ENCODE measurements at regions of chr1 and their contacts with region 1.

Region 1: GRCh38 chr1:101128211-101128727 is 102.7 kb upstream of the DPH5 start:
- DNase-seq: peak; percentile 23
- H3K4me3 Mint-ChIP-seq: no peak overlapping the region
- H3K27ac Mint-ChIP-seq: peak overlapping the region; percentile 58
- H3K4me1 Mint-ChIP-seq: peaks cover 60% of the 10 kb centered on the region
- H3K27me3 Mint-ChIP-seq: no peaks in the 10 kb centered on the region

Region 2: GRCh38 chr1:100443811-100444571 is 684.3 kb before region 1 on chr1:
- CTCF ChIA-PET with region 1: no interaction called
- intact Hi-C with region 1: loop called (anchors 10 kb)
- DNase-seq: peak; percentile 53
- H3K4me3 Mint-ChIP-seq: peak overlapping the region; percentile 72
- H3K27ac Mint-ChIP-seq: peak overlapping the region; percentile 96
- H3K4me1 Mint-ChIP-seq: peaks cover 85% of the 10 kb centered on the region
- H3K27me3 Mint-ChIP-seq: no peaks in the 10 kb centered on the region

Region 3: GRCh38 chr1:100921109-100921706 is 207.1 kb before region 1 on chr1:
- CTCF ChIA-PET with region 1: interaction called, 3 read pairs
- intact Hi-C with region 1: loop called (anchors 1 kb)
- DNase-seq: no peak
- H3K4me3 Mint-ChIP-seq: no peak overlapping the region
- H3K27ac Mint-ChIP-seq: peak overlapping the region; percentile 39
- H3K4me1 Mint-ChIP-seq: peaks cover 16% of the 10 kb centered on the region
- H3K27me3 Mint-ChIP-seq: no peaks in the 10 kb centered on the region

Region 4: GRCh38 chr1:101088431-101088830 is 39.8 kb before region 1 on chr1:
- CTCF ChIA-PET with region 1: no interaction called
- intact Hi-C with region 1: no loop called
- DNase-seq: no peak
- H3K4me3 Mint-ChIP-seq: no peak overlapping the region
- H3K27ac Mint-ChIP-seq: no peak overlapping the region
- H3K4me1 Mint-ChIP-seq: peaks cover 16% of the 10 kb centered on the region
- H3K27me3 Mint-ChIP-seq: no peaks in the 10 kb centered on the region

Region 5: DNA sequence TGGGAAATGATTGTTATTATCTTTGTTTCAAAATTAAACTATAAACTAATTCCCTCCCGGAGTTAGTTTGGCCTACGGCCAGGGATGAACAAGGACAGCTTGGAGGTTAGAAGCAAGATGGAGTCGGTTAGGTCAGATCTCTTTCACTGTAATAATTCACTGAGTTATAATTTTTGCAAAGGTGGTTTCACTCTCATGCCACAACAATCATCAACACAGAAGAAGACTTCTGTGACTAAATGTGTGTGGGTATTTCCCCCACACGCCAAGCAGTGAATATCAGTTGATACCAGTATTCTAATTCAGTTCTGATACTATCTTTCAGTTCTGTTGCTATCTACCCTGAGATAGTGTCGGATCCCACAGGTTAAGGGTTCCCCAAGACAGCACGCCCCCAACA is 323.6 kb after region 1 on chr1:
- CTCF ChIA-PET with region 1: no interaction called
- intact Hi-C with region 1: loop called (anchors 10 kb)
- DNase-seq: peak; percentile 48
- H3K4me3 Mint-ChIP-seq: no peak overlapping the region
- H3K27ac Mint-ChIP-seq: no peak overlapping the region
- H3K4me1 Mint-ChIP-seq: peaks cover 40% of the 10 kb centered on the region
- H3K27me3 Mint-ChIP-seq: peaks cover 3% of the 10 kb centered on the region

Region 6: DNA sequence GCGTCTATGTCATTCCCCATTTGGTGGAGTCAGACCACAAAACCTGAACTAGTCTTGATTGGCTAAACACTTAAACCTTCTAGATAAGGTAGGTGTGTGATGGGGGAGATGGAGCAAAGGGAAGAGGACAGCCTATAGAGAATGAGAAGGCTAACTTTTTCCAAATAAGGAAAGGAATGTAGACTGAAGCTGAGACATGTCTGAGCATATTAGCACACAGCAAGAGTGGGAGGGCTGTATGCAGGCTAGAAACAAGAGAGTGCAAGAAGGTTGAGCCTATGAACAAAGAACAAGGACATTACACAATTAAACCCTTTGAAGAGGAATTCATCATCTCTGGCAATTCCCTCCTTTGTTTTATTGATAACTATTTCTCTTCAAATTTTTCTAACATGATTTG is 957.6 kb after region 1 on chr1:
- CTCF ChIA-PET with region 1: no interaction called
- intact Hi-C with region 1: no loop called
- DNase-seq: no peak
- H3K4me3 Mint-ChIP-seq: no peak overlapping the region
- H3K27ac Mint-ChIP-seq: no peak overlapping the region
- H3K4me1 Mint-ChIP-seq: no peaks in the 10 kb centered on the region
- H3K27me3 Mint-ChIP-seq: no peaks in the 10 kb centered on the region

Measured in activated naive CD4-positive, alpha-beta T cell treated with anti-CD3 and anti-CD28 coated beads for 36 hours (primary cell).